Activated CD8-positive, alpha-beta T cell treated with anti-CD3 and anti-CD28 coated beads for 36 hours (primary cell): ENCODE measurements at regions of chr10 and their contacts with region 1.

Region 1: GRCh38 chr10:17607603-17608332 is 9.4 kb downstream of the HACD1 start:
- DNase-seq: no peak
- ATAC-seq: peak; percentile 86
- H3K4me3 Mint-ChIP-seq: no peak overlapping the region
- H3K27ac Mint-ChIP-seq: no peak overlapping the region
- H3K4me1 Mint-ChIP-seq: peaks cover 2% of the 10 kb centered on the region
- H3K27me3 Mint-ChIP-seq: peaks cover 1% of the 10 kb centered on the region
- CTCF ChIP-seq: peak; percentile 87

Region 2: GRCh38 chr10:17742918-17743317 is 135.2 kb after region 1 on chr10:
- CTCF ChIA-PET with region 1: interaction called, 12 read pairs
- POLR2A ChIA-PET with region 1: no interaction called
- intact Hi-C with region 1: loop called (anchors 2 kb)
- DNase-seq: peak; percentile 82
- ATAC-seq: peak; percentile 85
- H3K4me3 Mint-ChIP-seq: no peak overlapping the region
- H3K27ac Mint-ChIP-seq: no peak overlapping the region
- H3K4me1 Mint-ChIP-seq: peaks cover 9% of the 10 kb centered on the region
- H3K27me3 Mint-ChIP-seq: no peaks in the 10 kb centered on the region
- CTCF ChIP-seq: peak; percentile 75

Region 3: DNA sequence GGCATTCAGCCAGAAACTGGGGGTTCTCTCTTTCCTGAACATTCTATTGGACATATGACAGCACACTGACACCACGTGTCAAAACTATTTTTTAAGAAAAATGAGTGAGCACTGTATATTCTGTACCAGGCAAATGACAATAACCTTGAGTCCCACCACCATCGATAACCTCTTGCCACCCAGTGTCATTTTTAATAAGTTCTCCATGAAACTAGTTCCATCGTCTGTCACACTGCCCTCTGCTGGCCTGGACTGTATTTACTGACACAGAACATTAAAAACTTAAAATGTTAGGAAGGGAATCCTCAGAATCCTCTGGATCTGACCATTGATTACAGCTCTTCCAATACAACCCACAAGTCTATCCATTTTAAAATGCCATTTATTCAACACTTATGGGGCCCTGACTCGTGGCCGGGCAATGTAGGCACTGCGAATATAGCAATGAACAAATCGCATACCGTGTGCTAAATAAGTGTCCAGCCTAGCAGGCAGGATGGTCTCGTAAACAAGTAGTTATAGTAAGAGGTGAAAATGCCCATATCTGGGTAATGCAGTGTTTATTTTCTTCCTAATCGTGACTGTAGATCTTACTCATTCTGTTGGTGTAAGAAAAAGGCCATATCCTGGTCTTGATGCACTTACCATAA is 496.6 kb after region 1 on chr10:
- CTCF ChIA-PET with region 1: no interaction called
- POLR2A ChIA-PET with region 1: no interaction called
- intact Hi-C with region 1: loop called (anchors 5 kb)
- DNase-seq: peak; percentile 73
- ATAC-seq: no peak
- H3K4me3 Mint-ChIP-seq: no peak overlapping the region
- H3K27ac Mint-ChIP-seq: no peak overlapping the region
- H3K4me1 Mint-ChIP-seq: no peaks in the 10 kb centered on the region
- H3K27me3 Mint-ChIP-seq: no peaks in the 10 kb centered on the region
- CTCF ChIP-seq: peak; percentile 72

Region 4: GRCh38 chr10:18214691-18215563 is 607.2 kb after region 1 on chr10:
- CTCF ChIA-PET with region 1: no interaction called
- POLR2A ChIA-PET with region 1: no interaction called
- intact Hi-C with region 1: loop called (anchors 10 kb)
- DNase-seq: peak; percentile 39
- ATAC-seq: no peak
- H3K4me3 Mint-ChIP-seq: no peak overlapping the region
- H3K27ac Mint-ChIP-seq: no peak overlapping the region
- H3K4me1 Mint-ChIP-seq: no peaks in the 10 kb centered on the region
- H3K27me3 Mint-ChIP-seq: peaks cover 2% of the 10 kb centered on the region
- CTCF ChIP-seq: peak; percentile 62